ENCODE measurements at regions of chr1 and their contacts with region 1.

Region 1: GRCh38 chr1:30489737-30490389 is 233.5 kb downstream of the MATN1 start:
- DNase-seq: no peak
- H3K4me3 Mint-ChIP-seq: no peak overlapping the region
- H3K27ac Mint-ChIP-seq: no peak overlapping the region
- H3K4me1 Mint-ChIP-seq: no peaks in the 10 kb centered on the region
- H3K27me3 Mint-ChIP-seq: peaks cover 7% of the 10 kb centered on the region

Region 2: GRCh38 chr1:30099587-30100523 is 390.0 kb before region 1 on chr1:
- CTCF ChIA-PET with region 1: no interaction called
- POLR2A ChIA-PET with region 1: no interaction called
- intact Hi-C with region 1: loop called (anchors 5 kb)
- DNase-seq: no peak
- H3K4me3 Mint-ChIP-seq: no peak overlapping the region
- H3K27ac Mint-ChIP-seq: no peak overlapping the region
- H3K4me1 Mint-ChIP-seq: no peaks in the 10 kb centered on the region
- H3K27me3 Mint-ChIP-seq: peaks cover 13% of the 10 kb centered on the region